Activated T-helper 2 cell treated with anti-CD3 and anti-CD28 coated beads, Interferon-gamma antibody, Interleukin-2, Interleukin-4, amounts not matched to agents 10 μg/mL and 5 μg/mL and 100 μg/mL, durations not matched to agents 14 hours and 24 hours and 36 hours (primary cell): ENCODE measurements at regions of chr11 and their contacts with region 1.

Region 1: GRCh38 chr11:58597486-58598144 is 18.8 kb downstream of the ZFP91 start:
- DNase-seq: no peak
- H3K4me3 Mint-ChIP-seq: no peak overlapping the region
- H3K27ac Mint-ChIP-seq: peak overlapping the region; percentile 20
- H3K4me1 Mint-ChIP-seq: peaks cover 66% of the 10 kb centered on the region
- H3K27me3 Mint-ChIP-seq: no peaks in the 10 kb centered on the region

Region 2: DNA sequence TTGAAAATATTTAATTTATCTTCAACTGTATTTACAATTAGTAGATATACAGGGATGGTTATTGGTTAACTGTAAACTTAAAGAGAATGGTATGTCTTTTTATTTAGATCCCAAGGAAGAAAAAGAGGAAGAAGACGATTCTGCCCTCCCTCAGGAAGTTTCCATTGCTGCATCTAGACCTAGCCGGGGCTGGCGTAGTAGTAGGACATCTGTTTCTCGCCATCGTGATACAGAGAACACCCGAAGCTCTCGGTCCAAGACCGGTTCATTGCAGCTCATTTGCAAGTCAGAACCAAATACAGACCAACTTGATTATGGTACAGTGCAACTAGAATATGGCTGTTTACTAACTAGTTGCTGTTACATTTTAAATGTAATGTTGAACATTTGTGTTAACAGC is 12.1 kb after region 1 on chr11:
- intact Hi-C with region 1: loop called (anchors 2 kb)
- DNase-seq: no peak
- H3K4me3 Mint-ChIP-seq: no peak overlapping the region
- H3K27ac Mint-ChIP-seq: peak overlapping the region; percentile 8
- H3K4me1 Mint-ChIP-seq: peaks cover 48% of the 10 kb centered on the region
- H3K27me3 Mint-ChIP-seq: no peaks in the 10 kb centered on the region

Region 3: GRCh38 chr11:58688789-58689503 is 91.3 kb after region 1 on chr11:
- intact Hi-C with region 1: no loop called
- DNase-seq: no peak
- H3K4me3 Mint-ChIP-seq: no peak overlapping the region
- H3K27ac Mint-ChIP-seq: no peak overlapping the region
- H3K4me1 Mint-ChIP-seq: peaks cover 3% of the 10 kb centered on the region
- H3K27me3 Mint-ChIP-seq: no peaks in the 10 kb centered on the region